Activated CD4-positive, alpha-beta T cell treated with anti-CD3 and anti-CD28 coated beads for 36 hours (primary cell): ENCODE measurements at regions of chr6 and their contacts with region 1.

Region 1: DNA sequence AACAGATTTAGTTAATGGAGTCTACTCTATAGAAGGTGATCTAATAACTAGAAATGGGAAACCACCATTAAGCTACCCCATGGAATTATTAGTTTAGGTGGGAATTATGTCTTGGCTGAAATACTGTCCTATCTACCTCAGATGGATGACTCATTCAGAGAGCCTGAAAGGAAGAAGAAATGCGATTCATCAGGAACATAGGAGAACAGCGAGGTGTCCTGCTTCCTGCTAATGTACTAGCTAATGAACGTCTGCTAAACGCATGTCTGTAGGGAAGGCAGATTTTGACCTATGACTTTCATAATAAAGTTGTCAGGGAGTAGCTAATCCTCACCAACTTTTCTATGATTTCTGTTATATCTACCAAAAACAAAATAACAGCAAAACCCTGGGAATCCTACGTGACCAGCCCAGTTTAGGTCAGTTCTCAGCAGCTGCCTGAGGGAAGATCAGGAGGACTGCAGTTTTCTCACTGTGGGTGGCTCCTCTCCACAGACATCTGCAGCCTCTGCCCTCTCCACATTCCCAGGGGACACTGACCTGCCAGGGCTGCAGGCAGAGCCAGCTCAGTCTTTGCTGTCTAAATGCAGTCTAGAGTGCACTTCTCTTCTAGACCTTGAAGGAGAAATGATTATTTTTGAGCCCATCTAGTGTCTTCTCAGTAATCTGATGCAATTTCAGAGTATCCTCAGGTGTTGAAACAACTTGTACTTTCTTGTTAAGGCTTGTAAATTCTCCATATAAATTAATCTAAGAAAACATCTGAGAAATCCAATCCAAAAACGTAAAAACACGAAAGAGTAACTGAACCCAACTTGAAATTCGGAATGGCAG is 18.1 kb upstream of the SFT2D1 start:
- DNase-seq: no peak
- ATAC-seq: no peak
- H3K4me3 Mint-ChIP-seq: no peak overlapping the region
- H3K27ac Mint-ChIP-seq: no peak overlapping the region
- H3K4me1 Mint-ChIP-seq: no peaks in the 10 kb centered on the region
- H3K27me3 Mint-ChIP-seq: peaks cover 9% of the 10 kb centered on the region

Region 2: DNA sequence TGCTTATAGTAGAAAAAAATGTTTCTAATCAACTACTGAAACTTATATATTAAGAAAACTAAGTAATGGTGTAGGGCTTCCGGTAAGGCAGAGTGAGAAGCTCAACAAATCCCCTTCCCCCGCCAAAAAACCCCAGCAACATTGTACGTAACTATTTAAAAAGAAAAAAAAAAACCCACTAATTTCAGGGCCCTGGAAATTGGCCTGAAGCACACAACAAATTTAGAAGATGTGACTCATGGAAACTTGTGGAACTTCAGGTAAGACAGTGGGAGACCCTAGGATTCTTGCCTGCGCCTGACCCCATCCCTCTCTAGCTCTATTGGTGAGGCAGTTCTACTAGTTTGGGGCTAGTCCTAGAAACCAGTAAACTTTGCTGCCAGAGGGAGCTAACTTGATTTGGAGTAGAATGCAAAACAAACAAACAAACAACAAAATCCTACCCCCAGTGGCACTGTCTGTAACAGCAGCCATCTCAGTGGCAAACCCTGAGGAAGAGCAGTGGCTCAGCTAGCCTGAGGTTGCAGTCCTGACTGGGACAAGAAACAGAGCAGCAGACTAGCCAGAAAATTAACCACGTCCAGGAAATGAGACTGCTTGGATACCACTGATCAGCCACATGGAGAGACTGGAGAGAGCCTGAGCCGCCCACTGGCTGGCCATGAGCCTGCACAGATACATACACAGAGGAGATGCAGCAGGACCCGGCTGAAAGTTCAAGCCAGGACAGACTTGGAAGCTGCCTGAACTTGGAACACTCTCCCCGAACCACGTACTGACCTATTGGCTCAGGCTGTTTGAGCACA is 327.9 kb before region 1 on chr6:
- CTCF ChIA-PET with region 1: no interaction called
- POLR2A ChIA-PET with region 1: no interaction called
- intact Hi-C with region 1: loop called in 1 of 2 experiments (anchors 5 kb)
- DNase-seq: peak; percentile 20
- ATAC-seq: peak; percentile 59
- H3K4me3 Mint-ChIP-seq: no peak overlapping the region
- H3K27ac Mint-ChIP-seq: no peak overlapping the region
- H3K4me1 Mint-ChIP-seq: no peaks in the 10 kb centered on the region
- H3K27me3 Mint-ChIP-seq: no peaks in the 10 kb centered on the region